Activated naive CD4-positive, alpha-beta T cell treated with anti-CD3 and anti-CD28 coated beads for 36 hours (primary cell): ENCODE measurements at regions of chr12 and their contacts with region 1.

Region 1: GRCh38 chr12:71636704-71637115 is 26.9 kb downstream of the ZFC3H1 start:
- DNase-seq: no peak
- H3K4me3 Mint-ChIP-seq: no peak overlapping the region
- H3K27ac Mint-ChIP-seq: no peak overlapping the region
- H3K4me1 Mint-ChIP-seq: peaks cover 20% of the 10 kb centered on the region
- H3K27me3 Mint-ChIP-seq: no peaks in the 10 kb centered on the region

Region 2: GRCh38 chr12:71216725-71217579 is 419.8 kb before region 1 on chr12:
- CTCF ChIA-PET with region 1: no interaction called
- intact Hi-C with region 1: loop called (anchors 2 kb)
- DNase-seq: peak; percentile 20
- H3K4me3 Mint-ChIP-seq: no peak overlapping the region
- H3K27ac Mint-ChIP-seq: no peak overlapping the region
- H3K4me1 Mint-ChIP-seq: no peaks in the 10 kb centered on the region
- H3K27me3 Mint-ChIP-seq: no peaks in the 10 kb centered on the region

Region 3: DNA sequence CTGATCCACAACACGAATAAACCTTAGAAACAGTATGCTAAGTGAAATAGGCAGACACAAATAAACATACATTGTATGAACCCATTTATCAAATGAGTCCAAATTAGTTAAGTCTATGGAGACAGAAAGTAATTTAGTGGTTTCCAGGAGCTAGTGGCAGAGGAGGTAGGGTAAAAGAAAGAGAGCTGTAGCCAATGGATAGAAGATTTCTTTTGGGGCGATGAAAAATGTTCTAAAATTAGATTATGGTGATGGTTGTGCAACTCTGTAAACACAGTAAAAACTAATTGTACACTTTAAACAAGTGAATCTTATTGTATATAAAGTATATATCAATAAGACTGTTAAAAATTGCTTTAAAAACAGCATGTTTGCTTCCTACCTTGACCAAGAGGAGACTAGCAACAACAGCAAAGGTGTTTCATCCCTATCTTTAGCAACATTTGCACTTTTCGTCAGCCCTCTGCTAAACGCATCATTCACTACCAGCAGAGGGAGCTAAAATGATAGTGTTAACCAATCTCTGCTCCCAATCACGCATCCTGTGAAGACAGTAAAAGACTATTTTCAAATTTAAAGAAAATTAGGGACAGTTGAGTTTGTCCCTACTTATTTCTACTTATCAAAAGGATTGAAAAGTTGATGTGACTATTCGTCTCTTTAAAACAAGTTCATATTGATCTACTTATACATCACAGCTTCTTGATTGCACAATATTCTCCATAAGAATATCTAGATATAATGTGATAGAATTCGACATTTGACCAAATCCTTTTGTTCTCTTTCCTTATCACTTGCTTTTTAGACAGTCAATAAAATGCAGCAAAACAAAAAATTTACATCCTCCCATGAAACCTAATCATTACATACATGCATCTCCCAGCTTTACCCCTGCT is 221.1 kb before region 1 on chr12:
- CTCF ChIA-PET with region 1: interaction called, 3 read pairs
- intact Hi-C with region 1: loop called (anchors 1 kb)
- DNase-seq: peak; percentile 46
- H3K4me3 Mint-ChIP-seq: no peak overlapping the region
- H3K27ac Mint-ChIP-seq: no peak overlapping the region
- H3K4me1 Mint-ChIP-seq: no peaks in the 10 kb centered on the region
- H3K27me3 Mint-ChIP-seq: peaks cover 8% of the 10 kb centered on the region

Region 4: DNA sequence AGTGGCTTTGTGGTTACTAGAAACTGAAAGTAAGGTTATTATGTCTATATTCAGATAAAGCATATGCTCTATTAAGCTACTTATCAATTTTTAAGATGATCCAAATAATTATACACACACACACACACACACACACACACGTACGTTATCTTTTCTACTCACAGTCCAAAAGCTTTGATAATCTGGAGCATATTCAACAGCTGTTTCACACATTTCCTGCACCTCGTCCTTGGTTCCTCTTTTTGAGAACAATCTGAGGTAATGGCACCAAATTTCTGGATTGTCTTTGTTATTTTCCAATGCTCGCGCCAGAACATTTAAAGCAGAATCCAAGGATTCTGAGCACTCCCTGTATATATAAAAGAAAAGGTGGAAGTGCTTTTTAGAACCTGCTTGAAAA is 10.6 kb before region 1 on chr12:
- CTCF ChIA-PET with region 1: interaction called, 33 read pairs
- intact Hi-C with region 1: no loop called
- DNase-seq: no peak
- H3K4me3 Mint-ChIP-seq: no peak overlapping the region
- H3K27ac Mint-ChIP-seq: no peak overlapping the region
- H3K4me1 Mint-ChIP-seq: peaks cover 24% of the 10 kb centered on the region
- H3K27me3 Mint-ChIP-seq: no peaks in the 10 kb centered on the region

Region 5: DNA sequence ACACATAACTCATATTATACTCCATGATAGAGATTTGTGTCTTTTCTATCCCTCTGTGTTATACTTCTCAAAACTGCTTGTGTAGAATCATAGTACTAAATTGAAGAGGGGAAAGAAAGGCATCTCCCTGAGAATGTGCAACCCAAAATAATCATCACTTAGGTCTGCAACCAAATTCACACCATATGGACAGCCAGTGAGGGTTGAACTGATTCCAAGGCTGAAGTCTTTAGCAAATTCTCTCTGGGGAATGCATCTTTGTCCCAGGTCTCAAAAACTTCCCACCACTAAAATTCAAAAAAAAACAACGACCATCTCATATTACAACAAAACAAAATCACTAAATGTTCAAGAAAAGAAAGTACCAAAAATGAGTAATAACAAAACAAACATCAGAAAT is 15.9 kb after region 1 on chr12:
- CTCF ChIA-PET with region 1: interaction called, 29 read pairs
- intact Hi-C with region 1: loop called (anchors 2 kb)
- DNase-seq: no peak
- H3K4me3 Mint-ChIP-seq: no peak overlapping the region
- H3K27ac Mint-ChIP-seq: no peak overlapping the region
- H3K4me1 Mint-ChIP-seq: peaks cover 36% of the 10 kb centered on the region
- H3K27me3 Mint-ChIP-seq: no peaks in the 10 kb centered on the region

Region 6: GRCh38 chr12:71719615-71720370 is 83.1 kb after region 1 on chr12:
- CTCF ChIA-PET with region 1: no interaction called
- intact Hi-C with region 1: no loop called
- DNase-seq: no peak
- H3K4me3 Mint-ChIP-seq: no peak overlapping the region
- H3K27ac Mint-ChIP-seq: no peak overlapping the region
- H3K4me1 Mint-ChIP-seq: no peaks in the 10 kb centered on the region
- H3K27me3 Mint-ChIP-seq: no peaks in the 10 kb centered on the region

Region 7: DNA sequence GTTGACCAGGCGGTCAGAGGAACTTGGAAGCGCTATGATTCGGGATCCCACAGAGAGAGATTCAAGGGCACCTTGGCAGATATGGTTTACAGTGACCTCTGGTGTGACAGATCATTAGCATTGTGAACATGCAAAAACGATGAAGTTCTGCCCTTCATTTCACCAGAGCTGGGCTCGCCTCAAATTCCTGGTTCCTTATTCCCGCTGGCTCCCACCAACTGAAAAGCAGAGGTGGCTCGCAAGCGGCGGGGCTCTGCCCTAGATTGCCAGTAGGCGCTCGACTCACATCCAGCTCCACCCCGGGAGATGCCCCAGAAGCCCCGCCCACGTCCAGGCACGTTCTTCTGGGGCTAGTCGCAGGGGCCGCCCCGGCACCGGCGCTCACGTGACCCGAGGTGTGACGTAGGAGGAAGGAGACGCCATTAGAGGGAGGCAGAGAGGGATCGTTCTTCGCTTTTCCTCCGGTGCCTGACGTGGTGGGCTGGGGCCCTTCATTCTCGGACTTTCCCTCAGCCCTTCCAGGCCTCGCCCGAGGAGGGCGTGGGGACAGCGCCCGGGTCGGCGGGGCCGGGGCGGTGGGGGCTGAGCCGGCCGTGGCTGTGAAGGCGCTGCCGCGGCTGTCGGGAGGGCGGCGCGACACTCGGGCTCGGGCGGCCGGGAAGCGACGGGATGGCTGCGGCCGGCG is 117.9 kb after region 1 on chr12 and contains the start of gene RAB21:
- CTCF ChIA-PET with region 1: interaction called, 4 read pairs
- intact Hi-C with region 1: loop called (anchors 2 kb)
- DNase-seq: peak; percentile 99
- H3K4me3 Mint-ChIP-seq: peak within 1 kb of the TSS; percentile 89
- H3K27ac Mint-ChIP-seq: peak within 1 kb of the TSS; percentile 96
- H3K4me1 Mint-ChIP-seq: peaks cover 35% of the 10 kb centered on the region
- H3K27me3 Mint-ChIP-seq: peaks cover 7% of the 10 kb centered on the region
- total RNA-seq, gene RAB21: 76.3 to 80.3 TPM